ENCODE measurements at regions of chr1 and their contacts with region 1.

Region 1: GRCh38 chr1:221777431-221778072 is 35.7 kb upstream of the DUSP10 start:
- DNase-seq: peak; percentile 55
- H3K4me3 Mint-ChIP-seq: peak overlapping the region; percentile 79
- H3K27ac Mint-ChIP-seq: peak overlapping the region; percentile 98
- H3K4me1 Mint-ChIP-seq: peaks cover 92% of the 10 kb centered on the region
- H3K27me3 Mint-ChIP-seq: no peaks in the 10 kb centered on the region

Region 2: GRCh38 chr1:221725735-221726672 is 51.5 kb before region 1 on chr1:
- intact Hi-C with region 1: loop called (anchors 1 kb)
- DNase-seq: no peak
- H3K4me3 Mint-ChIP-seq: peak overlapping the region; percentile 55
- H3K27ac Mint-ChIP-seq: peak overlapping the region; percentile 92
- H3K4me1 Mint-ChIP-seq: peaks cover 87% of the 10 kb centered on the region
- H3K27me3 Mint-ChIP-seq: no peaks in the 10 kb centered on the region

Region 3: GRCh38 chr1:221824025-221824424 is 46.5 kb after region 1 on chr1:
- intact Hi-C with region 1: loop called (anchors 1 kb)
- DNase-seq: no peak
- H3K4me3 Mint-ChIP-seq: no peak overlapping the region
- H3K27ac Mint-ChIP-seq: peak overlapping the region; percentile 24
- H3K4me1 Mint-ChIP-seq: peaks cover 65% of the 10 kb centered on the region
- H3K27me3 Mint-ChIP-seq: peaks cover 8% of the 10 kb centered on the region

Region 4: DNA sequence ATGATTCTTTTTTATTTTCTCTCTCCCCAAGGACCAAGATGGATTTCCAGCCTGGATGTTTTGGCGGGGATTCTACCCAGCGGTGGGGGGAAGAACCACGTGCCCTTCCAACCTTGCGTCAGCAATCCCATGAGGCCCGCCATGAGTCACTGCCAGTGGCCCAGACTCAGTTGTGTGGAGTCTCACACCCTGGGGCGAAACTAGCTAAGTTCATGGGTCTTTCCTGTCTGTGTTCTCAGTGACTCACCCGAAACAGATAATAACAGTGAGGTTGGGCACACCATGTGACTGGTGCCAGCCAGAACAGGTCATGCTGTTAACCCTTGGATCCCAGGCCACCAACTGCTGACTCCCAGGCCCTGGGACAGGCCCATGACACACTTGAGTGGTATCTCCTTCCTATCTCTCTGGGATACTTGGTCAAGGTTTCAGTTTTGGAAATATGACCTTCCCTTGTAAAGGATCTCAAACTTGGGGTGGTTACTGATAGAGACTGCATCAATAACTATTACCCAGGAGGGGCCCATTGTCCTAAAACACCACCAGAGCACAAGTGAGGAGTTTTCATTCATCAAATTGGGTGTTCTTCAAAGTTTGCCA is 62.3 kb after region 1 on chr1:
- intact Hi-C with region 1: loop called (anchors 1 kb)
- DNase-seq: peak; percentile 26
- H3K4me3 Mint-ChIP-seq: no peak overlapping the region
- H3K27ac Mint-ChIP-seq: peak overlapping the region; percentile 64
- H3K4me1 Mint-ChIP-seq: peaks cover 57% of the 10 kb centered on the region
- H3K27me3 Mint-ChIP-seq: peaks cover 2% of the 10 kb centered on the region

Region 5: DNA sequence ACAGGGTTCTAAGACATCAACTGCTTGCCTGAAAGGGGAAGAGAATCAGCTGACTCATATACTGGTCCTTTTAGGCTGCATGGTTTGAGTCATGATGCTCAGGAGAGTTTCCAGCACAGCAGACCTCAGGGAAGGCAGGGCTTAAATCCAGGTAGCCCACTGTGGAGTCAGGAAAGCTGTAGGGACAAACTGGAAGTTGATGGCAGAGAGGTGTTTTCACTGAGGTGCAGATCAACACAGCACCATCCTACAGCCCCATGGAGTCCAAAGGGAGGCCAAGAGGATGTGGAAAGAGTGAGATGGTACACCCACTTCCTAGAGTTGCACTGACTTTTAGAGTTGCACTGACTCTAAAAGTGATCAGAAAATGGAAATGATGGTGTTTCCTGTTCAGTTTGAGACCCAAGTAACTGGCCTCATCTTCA is 216.7 kb after region 1 on chr1:
- intact Hi-C with region 1: loop called (anchors 2 kb)
- DNase-seq: no peak
- H3K4me3 Mint-ChIP-seq: no peak overlapping the region
- H3K27ac Mint-ChIP-seq: peak overlapping the region; percentile 77
- H3K4me1 Mint-ChIP-seq: peaks cover 40% of the 10 kb centered on the region
- H3K27me3 Mint-ChIP-seq: peaks cover 2% of the 10 kb centered on the region